OCI-LY7 (cell line): ENCODE measurements at regions of chr1 and their contacts with region 1.

Region 1: DNA sequence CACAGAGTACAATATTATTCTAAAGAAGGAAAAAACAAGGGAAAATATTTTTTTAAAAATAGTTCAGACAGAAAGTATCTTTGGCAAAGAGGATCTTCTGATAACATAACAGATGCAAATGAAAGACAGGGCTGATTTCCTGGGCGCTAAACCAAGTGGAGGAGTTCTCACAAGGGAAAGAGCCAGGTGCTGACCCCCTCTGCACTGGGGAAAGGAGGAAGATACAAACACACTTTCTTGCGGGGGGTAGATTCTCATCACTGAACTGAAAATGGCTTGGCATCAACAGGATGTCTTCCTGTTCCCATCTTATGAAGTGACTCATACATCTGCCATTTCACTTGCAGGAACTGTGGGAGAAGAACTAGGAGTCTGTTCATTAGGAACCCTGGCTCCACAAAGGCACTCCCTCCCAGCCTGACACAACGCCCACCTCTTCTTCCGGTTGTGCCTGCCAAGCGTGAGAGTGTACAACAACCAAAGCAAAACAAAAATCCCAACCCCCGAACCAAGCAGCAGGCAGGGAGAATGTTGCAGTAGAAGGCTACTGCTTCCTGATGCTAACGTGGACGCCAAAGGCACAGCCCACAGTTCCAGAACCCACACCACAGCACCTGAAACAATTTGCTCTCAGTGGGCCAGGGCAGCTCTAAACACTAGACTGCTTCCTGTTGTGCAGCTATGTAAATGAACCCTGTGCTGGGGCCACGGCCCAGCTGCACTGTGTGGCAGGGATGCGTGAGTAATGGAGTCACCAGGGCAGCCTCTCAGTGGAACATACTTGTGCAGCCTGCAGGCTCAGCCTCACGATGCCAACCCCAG is 51.0 kb downstream of the GADD45A start:
- DNase-seq: peak; percentile 93
- H3K4me3 ChIP-seq: peak overlapping the region; percentile 67
- H3K27ac ChIP-seq: peak overlapping the region; percentile 96
- H3K4me1 ChIP-seq: peaks cover 74% of the 10 kb centered on the region
- CTCF ChIP-seq: no peak

Region 2: DNA sequence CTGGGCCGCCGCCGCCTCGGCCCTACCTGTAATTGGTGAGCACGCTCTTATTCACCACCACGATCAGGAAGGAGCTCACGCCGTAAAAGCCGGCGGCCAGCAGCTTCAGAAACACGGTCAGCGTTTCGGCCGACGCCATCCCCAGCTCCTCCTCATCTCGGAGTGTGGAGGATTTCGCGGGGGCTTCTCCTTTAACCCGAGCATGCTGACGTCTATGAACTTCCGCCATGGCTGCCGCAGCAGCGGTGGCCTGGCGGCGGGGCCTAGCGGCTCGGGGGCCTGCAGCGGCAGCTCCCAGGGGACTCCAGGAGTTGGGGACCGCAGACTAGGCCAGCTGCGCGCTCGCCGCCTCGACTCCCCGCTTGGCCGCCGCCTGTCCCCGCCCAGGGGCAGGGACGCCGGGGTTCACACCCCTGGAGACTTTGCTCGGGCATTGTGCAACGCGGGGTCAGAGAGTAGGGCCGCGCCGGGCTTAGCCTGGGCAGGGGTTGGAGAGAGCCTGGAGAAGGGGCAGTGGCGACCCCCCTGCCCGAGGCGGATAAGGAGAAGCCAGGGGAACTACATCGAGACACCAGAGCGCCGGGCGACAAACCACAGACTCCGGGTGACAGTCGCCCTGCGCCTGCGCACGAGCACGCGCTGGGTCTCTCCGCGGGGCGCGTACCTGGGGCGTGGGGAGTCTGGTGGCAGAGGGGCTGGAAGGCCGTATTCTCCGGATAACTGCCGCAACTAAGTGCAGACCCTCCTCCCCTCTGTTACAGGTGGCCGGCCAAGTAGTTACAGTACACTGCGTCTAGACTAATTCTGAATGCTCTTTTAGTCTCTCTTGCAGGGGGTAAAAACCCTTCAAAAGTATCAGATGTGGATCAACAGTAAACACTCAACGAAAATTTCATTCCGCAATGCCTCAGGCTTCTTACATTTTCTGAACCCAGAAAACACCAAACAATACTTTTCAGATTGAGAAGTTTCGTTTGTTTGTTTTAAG is 681.9 kb before region 1 on chr1 and contains the start of gene SLC35D1:
- CTCF ChIA-PET with region 1: no interaction called
- POLR2A ChIA-PET with region 1: no interaction called
- intact Hi-C with region 1: loop called (anchors 5 kb)
- DNase-seq: peak; percentile 91
- H3K4me3 ChIP-seq: peak within 1 kb of the TSS; percentile 89
- H3K27ac ChIP-seq: peak within 1 kb of the TSS; percentile 76
- H3K4me1 ChIP-seq: peaks cover 20% of the 10 kb centered on the region
- CTCF ChIP-seq: no peak
- total RNA-seq, gene SLC35D1: 10.8 and 11.2 TPM in 2 replicates

Region 3: DNA sequence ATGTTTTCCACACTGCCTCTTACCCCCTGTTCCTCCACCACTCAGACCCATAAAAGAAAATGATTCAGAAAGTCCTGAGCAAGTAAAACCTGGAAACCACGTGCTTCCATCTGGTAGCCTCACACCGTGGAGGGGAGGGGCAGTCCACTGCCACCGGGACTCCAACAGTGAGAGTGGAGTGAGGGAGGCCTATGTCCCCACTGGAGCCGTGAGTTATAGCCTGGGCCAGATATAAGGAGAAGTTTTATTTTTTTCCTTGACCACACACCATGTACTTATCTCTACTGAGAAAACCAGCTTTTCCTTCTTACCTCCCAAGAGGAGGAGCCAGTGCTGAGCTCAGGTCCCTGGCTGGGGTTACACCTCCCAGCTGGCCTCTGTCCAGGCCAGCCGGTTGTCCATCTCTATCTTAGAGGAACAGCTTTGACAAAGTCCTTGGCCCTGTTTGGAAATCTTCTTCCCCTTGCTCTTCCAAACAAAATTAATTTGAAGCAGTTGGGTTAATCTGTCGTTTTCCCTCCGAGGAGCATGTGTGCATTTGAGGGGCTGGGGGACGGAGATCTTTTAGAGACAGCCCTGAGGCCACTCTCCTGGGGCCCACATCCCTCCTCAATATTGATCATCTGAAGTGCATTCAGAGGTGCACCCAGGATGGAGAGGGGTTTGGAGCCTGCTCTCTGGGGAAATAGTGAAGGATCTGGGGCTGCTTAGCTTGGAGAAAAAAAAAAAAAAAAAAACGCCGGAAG is 256.7 kb before region 1 on chr1:
- CTCF ChIA-PET with region 1: no interaction called
- POLR2A ChIA-PET with region 1: no interaction called
- intact Hi-C with region 1: no loop called
- DNase-seq: no peak
- H3K4me3 ChIP-seq: no peak overlapping the region
- H3K27ac ChIP-seq: no peak overlapping the region
- H3K4me1 ChIP-seq: no peaks in the 10 kb centered on the region
- CTCF ChIP-seq: no peak

Region 4: GRCh38 chr1:67691712-67692111 is 44.3 kb before region 1 on chr1:
- CTCF ChIA-PET with region 1: interaction called, 3 read pairs
- POLR2A ChIA-PET with region 1: interaction called, 123 read pairs
- intact Hi-C with region 1: no loop called
- DNase-seq: no peak
- H3K4me3 ChIP-seq: no peak overlapping the region
- H3K27ac ChIP-seq: no peak overlapping the region
- H3K4me1 ChIP-seq: peaks cover 39% of the 10 kb centered on the region
- CTCF ChIP-seq: no peak

Region 5: GRCh38 chr1:67723620-67724019 is 12.4 kb before region 1 on chr1:
- CTCF ChIA-PET with region 1: interaction called, 6 read pairs
- POLR2A ChIA-PET with region 1: interaction called, 84 read pairs
- intact Hi-C with region 1: no loop called
- DNase-seq: no peak
- H3K4me3 ChIP-seq: no peak overlapping the region
- H3K27ac ChIP-seq: no peak overlapping the region
- H3K4me1 ChIP-seq: peaks cover 35% of the 10 kb centered on the region
- CTCF ChIP-seq: no peak

Region 6: DNA sequence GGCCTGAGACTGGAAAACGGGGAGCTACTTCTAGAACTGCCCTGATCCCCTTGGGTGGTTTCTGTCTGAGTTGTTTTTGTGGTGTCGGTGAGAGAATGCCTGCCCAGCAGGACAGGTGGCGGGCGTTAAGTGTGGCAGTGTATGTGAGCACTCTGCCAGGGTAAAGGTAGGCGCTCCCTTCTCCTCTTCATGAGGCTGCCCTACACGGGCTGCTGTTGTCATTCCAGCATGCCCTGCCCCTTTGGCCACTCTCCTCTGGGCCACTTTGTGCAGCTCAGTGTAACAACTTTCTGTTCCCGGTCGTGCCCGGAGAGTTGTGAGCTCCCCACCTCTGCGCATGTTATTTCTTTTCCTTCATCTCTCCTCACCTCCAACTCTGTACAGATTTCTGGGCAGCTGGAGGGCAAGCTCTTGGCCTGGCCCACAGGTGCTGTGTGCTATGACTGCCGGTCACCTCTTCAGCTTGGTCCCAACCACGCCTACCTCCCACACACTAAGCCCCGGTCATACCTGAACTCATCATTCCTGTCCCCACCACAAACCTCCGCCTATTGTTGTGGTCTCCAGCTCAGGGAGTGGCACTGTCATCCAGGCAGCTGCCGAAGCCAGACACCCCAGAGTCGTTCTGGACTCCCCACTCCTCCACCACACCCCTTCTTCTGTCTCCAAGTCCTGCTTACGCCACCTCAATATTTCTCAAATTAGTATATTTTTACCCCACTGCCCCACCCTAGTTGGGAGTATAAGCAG is 17.9 kb after region 1 on chr1:
- CTCF ChIA-PET with region 1: no interaction called
- POLR2A ChIA-PET with region 1: interaction called, 40 read pairs
- intact Hi-C with region 1: no loop called
- DNase-seq: no peak
- H3K4me3 ChIP-seq: no peak overlapping the region
- H3K27ac ChIP-seq: no peak overlapping the region
- H3K4me1 ChIP-seq: peaks cover 41% of the 10 kb centered on the region
- CTCF ChIP-seq: no peak

Region 7: DNA sequence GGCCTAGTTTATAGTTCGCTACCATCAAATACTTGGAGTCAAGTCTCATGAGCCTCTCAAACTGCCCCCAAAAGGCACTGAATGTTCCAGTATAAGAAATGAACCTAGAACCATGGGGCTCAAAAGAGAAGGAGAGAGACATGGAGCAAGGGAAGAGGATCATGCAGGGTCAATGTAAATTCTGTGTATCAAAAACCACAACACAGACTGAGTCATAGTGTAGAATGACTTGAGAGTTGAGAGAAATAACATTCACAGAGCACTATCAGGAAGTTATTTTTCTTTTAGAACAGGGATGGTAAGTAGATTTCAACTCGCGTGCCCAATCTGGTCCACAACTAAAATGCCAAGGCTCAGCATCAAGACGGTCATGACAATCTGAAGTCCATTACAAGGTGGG is 37.4 kb after region 1 on chr1:
- CTCF ChIA-PET with region 1: no interaction called
- POLR2A ChIA-PET with region 1: no interaction called
- intact Hi-C with region 1: no loop called
- DNase-seq: no peak
- H3K4me3 ChIP-seq: no peak overlapping the region
- H3K27ac ChIP-seq: no peak overlapping the region
- H3K4me1 ChIP-seq: no peaks in the 10 kb centered on the region
- CTCF ChIP-seq: no peak